SK-N-SH (cell line): ENCODE measurements at regions of chr14 and their contacts with region 1.

Region 1: GRCh38 chr14:22892488-22892887 is 9.5 kb downstream of the REM2 start:
- DNase-seq: no peak
- H3K4me3 ChIP-seq: no peak overlapping the region
- H3K27ac ChIP-seq: no peak overlapping the region
- H3K4me1 ChIP-seq: peaks cover 8 to 9% of the 10 kb centered on the region in 2 experiments; a peak in 2 of 4 replicates
- H3K27me3 ChIP-seq: no peaks in the 10 kb centered on the region
- CTCF ChIP-seq: no peak
- EP300 ChIP-seq: no peak
- RAD21 ChIP-seq: no peak

Region 2: GRCh38 chr14:22872033-22872832 is 20.3 kb before region 1 on chr14:
- CTCF ChIA-PET with region 1: interaction called, 25 read pairs
- POLR2A ChIA-PET with region 1: interaction called, 3 read pairs
- DNase-seq: peak; percentile 83
- H3K4me3 ChIP-seq: peak overlapping the region; percentile 77 to 93
- H3K27ac ChIP-seq: peak overlapping the region; percentile 83 to 87
- H3K4me1 ChIP-seq: peaks cover 8 to 17% of the 10 kb centered on the region in 2 experiments
- H3K27me3 ChIP-seq: no peaks in the 10 kb centered on the region
- CTCF ChIP-seq: peak; percentile 97
- EP300 ChIP-seq: no peak
- RAD21 ChIP-seq: peak; percentile 79